A549 (cell line): ENCODE measurements at regions of chr3 and their contacts with region 1.

Region 1: GRCh38 chr3:48208076-48208475 is 15.2 kb upstream of the CAMP start:
- DNase-seq: no peak
- ATAC-seq: no peak
- H3K4me3 ChIP-seq: no peak overlapping the region
- H3K27ac ChIP-seq: no peak overlapping the region
- H3K4me1 ChIP-seq: no peaks in the 10 kb centered on the region
- CTCF ChIP-seq: no peak
- EP300 ChIP-seq: no peak
- POLR2A ChIP-seq: no peak
- RAD21 ChIP-seq: no peak

Region 2: DNA sequence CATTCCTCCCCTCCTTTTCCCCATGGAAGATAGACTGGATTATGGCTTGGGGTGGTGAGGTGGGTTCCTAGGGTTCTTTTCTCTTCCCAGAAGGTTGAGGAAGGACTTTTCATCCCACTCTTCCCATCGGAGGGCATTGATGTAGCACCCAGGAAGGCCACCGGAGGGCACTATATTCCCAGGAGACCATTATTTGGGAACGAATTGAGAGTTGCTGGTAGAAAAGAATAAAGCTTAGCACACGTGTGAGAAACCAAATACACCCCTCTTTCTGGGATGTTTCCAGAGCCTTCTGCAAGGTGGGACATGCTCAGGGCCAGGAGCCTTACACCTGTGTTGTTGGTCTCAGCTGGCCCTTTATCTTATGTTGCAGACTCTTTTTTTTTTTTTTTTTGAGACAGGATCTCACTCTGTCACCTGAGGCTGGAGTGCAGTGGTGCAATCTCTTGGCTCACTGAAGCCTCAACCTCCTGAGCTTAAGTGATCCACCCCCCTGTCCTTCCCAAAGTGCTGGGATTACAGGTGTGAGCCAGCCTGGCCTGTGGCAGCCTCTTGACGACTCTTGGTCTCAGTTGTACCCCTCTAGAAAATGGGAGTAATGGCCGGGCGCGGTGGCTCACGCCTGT is 13.5 kb before region 1 on chr3:
- CTCF ChIA-PET with region 1: interaction called, 11 read pairs
- POLR2A ChIA-PET with region 1: no interaction called
- DNase-seq: peak; percentile 56 to 72
- ATAC-seq: peak; percentile 77 to 88; a peak in 5 of 6 replicates
- H3K4me3 ChIP-seq: no peak overlapping the region
- H3K27ac ChIP-seq: no peak overlapping the region
- H3K4me1 ChIP-seq: no peaks in the 10 kb centered on the region
- CTCF ChIP-seq: peak; percentile 72
- EP300 ChIP-seq: no peak
- POLR2A ChIP-seq: no peak
- RAD21 ChIP-seq: peak; percentile 64 to 75